Endothelial cell of umbilical vein (primary cell): ENCODE measurements at regions of chr1 and their contacts with region 1.

Region 1: GRCh38 chr1:169794530-169795416 is at the start of gene METTL18:
- DNase-seq: peak; percentile 97
- H3K4me3 ChIP-seq: peak within 1 kb of the TSS; percentile 29 to 92 (median 77)
- H3K27ac ChIP-seq: peak within 1 kb of the TSS; percentile 66
- H3K4me1 ChIP-seq: peaks cover 11% of the 10 kb centered on the region
- H3K27me3 ChIP-seq: no peaks in the 10 kb centered on the region
- CTCF ChIP-seq: peak in 1 of 2 donors; percentile 48
- POLR2A ChIP-seq: peak; percentile 56
- total RNA-seq, gene METTL18: 6.6 TPM in 2 replicates

Region 2: DNA sequence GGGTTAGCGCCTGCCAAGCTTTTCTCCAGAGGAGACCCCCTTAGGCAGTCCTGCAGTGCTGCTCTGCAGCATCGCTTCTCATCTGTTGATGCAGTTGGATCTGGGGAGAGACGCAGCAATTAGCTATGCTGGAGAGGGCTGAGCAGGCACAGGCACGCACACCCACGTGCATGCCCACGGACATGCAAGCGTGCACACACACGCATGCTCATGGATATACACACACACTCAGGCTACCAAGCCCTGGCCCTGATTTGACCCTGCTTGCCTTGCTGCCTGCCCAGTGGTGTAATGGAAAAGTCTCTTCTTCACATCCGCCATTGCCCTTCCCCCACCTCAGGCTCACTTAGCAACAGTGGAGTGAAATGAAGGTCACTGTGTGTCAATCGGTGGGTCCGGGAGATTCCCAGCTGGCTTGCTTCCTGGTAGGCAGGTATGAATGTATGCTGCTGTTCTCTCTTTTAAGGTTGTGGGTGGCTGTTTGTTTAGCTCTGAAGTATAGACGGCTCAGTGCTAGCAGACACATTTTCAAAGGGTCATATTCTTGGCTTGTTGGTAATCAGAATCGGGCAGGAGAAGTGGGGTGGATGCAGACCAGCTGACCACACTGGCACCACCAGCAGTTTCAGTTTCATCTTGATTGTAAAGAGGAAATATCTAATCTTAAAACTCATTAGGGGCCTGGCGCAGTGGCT is 678.7 kb before region 1 on chr1:
- CTCF ChIA-PET with region 1: no interaction called
- POLR2A ChIA-PET with region 1: no interaction called
- dilution Hi-C with region 1: no loop called
- intact Hi-C with region 1: loop called (anchors 10 kb)
- DNase-seq: no peak
- H3K4me3 ChIP-seq: no peak overlapping the region
- H3K27ac ChIP-seq: no peak overlapping the region
- H3K4me1 ChIP-seq: peaks cover 36% of the 10 kb centered on the region
- H3K27me3 ChIP-seq: no peaks in the 10 kb centered on the region
- CTCF ChIP-seq: no peak
- POLR2A ChIP-seq: no peak

Region 3: DNA sequence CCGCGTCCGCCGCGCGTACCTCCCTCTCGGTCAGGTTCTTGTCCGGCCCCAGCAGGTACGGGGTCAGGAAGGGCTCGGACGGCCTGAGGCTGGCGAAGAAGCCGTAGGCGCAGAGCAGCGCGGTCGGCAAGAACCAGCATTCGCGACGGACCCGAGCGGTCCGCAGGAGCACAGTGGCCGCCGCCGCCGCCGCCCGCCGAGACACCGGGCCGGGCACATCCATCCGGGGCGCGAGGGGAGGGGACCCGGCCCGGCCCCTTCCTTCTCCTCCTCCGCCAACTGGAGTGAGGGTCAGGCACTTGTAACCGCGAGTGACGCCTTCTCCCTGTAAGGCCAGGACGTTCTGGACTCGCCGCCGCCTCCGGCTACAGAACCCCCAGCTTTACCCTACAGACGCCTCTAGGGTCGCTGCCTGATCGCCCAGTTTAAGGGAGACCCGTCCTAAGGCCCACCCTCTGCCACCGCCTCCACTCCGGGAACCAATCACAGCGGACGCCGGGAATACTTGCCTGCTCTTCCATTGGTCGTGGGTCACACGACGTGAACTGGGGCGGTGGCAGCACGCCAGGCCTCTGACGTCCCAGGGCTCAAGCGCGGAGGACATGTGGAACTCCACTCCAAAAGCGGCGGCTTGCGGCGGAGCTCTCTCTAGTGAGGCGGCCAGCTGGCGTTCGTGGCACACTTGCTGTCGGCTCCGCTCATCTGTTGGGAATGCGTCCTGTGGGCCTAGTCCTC is 309.1 kb before region 1 on chr1 and contains the start of gene SLC19A2:
- CTCF ChIA-PET with region 1: interaction called, 4 read pairs
- POLR2A ChIA-PET with region 1: no interaction called
- dilution Hi-C with region 1: no loop called
- intact Hi-C with region 1: loop called (anchors 1 kb)
- DNase-seq: peak; percentile 99
- H3K4me3 ChIP-seq: peak within 1 kb of the TSS; percentile 37 to 80 (median 78)
- H3K27ac ChIP-seq: peak within 1 kb of the TSS; percentile 96
- H3K4me1 ChIP-seq: peaks cover 31% of the 10 kb centered on the region
- H3K27me3 ChIP-seq: no peaks in the 10 kb centered on the region
- CTCF ChIP-seq: peak in 1 of 2 donors; percentile 31
- POLR2A ChIP-seq: peak; percentile 87
- total RNA-seq, gene SLC19A2: 5.4 and 7.0 TPM in 2 replicates

Region 4: DNA sequence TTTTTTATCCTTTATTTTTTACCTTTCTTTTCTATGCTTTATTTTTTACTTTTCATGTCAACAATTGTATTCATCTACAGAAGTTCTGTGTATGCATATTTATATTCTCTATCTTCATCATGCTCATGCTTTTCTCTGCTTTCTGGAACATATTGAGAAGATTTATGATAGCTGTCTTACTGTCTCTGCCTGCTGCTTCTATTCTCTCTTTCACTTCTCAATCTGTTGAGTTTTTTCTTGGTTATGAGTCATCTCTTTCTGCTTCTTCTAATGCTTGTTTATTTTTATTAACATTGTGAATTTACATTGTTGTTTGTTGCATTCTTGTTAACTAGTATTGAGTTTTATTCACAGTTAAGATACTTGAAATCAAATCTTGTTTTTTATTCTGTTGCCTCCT is 231.1 kb before region 1 on chr1:
- CTCF ChIA-PET with region 1: no interaction called
- POLR2A ChIA-PET with region 1: no interaction called
- dilution Hi-C with region 1: no loop called
- intact Hi-C with region 1: no loop called
- DNase-seq: no peak
- H3K4me3 ChIP-seq: no peak overlapping the region
- H3K27ac ChIP-seq: no peak overlapping the region
- H3K4me1 ChIP-seq: peaks cover 8% of the 10 kb centered on the region
- H3K27me3 ChIP-seq: no peaks in the 10 kb centered on the region
- CTCF ChIP-seq: no peak
- POLR2A ChIP-seq: no peak

Region 5: GRCh38 chr1:169765580-169766331 is 29.0 kb before region 1 on chr1:
- CTCF ChIA-PET with region 1: no interaction called
- POLR2A ChIA-PET with region 1: no interaction called
- dilution Hi-C with region 1: no loop called
- intact Hi-C with region 1: no loop called
- DNase-seq: no peak
- H3K4me3 ChIP-seq: no peak overlapping the region
- H3K27ac ChIP-seq: no peak overlapping the region
- H3K4me1 ChIP-seq: no peaks in the 10 kb centered on the region
- H3K27me3 ChIP-seq: no peaks in the 10 kb centered on the region
- CTCF ChIP-seq: no peak
- POLR2A ChIP-seq: no peak

Region 6: GRCh38 chr1:169779980-169780379 is 14.8 kb before region 1 on chr1:
- CTCF ChIA-PET with region 1: interaction called, 3 read pairs
- POLR2A ChIA-PET with region 1: no interaction called
- dilution Hi-C with region 1: no loop called
- intact Hi-C with region 1: loop called (anchors 1 kb)
- DNase-seq: peak; percentile 94
- H3K4me3 ChIP-seq: no peak overlapping the region
- H3K27ac ChIP-seq: peak overlapping the region; percentile 81
- H3K4me1 ChIP-seq: peaks cover 35% of the 10 kb centered on the region
- H3K27me3 ChIP-seq: peaks cover under 1 to 5% of the 10 kb centered on the region in 2 experiments
- CTCF ChIP-seq: no peak
- POLR2A ChIP-seq: no peak

Region 7: GRCh38 chr1:169877800-169878491 is 83.2 kb after region 1 on chr1:
- CTCF ChIA-PET with region 1: no interaction called
- POLR2A ChIA-PET with region 1: no interaction called
- dilution Hi-C with region 1: no loop called
- intact Hi-C with region 1: no loop called
- DNase-seq: no peak
- H3K4me3 ChIP-seq: no peak overlapping the region
- H3K27ac ChIP-seq: no peak overlapping the region
- H3K4me1 ChIP-seq: no peaks in the 10 kb centered on the region
- H3K27me3 ChIP-seq: no peaks in the 10 kb centered on the region
- CTCF ChIP-seq: no peak
- POLR2A ChIP-seq: no peak

Region 8: DNA sequence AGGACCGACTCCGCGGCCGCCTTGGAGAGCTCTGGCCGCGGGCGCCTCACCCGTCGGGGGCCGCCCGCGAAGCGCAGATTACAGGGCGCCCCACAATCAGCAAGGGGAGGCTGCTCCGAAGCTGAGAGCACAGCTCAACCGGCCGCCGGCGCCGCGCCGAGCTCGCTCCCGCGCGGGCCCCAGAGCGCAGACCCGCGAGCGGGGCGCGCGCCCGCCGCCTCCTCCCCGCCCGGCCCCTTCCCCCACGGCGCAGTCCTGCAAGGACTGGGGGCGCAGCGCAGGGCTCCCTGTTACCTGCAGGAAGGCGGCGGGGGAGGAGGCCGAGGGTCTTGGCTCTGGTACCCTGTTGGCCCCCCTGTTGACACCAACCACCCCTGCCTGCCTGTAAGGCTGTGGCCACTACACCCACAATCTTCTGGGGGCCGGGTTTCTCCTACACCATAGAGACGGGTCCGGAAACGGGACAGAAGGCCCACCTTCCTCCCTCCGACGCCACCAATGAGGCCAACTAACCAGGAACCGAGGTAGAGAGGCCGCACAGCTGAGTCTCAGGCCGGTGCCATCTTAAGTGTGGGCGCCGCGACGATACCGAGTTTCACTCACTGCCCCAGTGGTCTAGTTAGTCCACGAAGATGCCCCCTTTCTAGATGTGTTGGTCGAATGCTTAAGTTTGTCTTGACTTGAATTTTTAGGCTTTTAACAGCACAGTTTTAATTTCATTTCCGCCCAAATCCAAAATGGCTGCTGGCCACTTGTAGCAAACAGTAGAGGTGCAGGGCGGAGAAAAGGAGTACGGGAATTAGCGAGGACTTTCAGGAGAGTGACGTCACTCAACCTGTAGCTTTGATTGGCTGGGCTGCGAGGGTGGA is 99.0 kb after region 1 on chr1 and contains the start of gene SCYL3:
- CTCF ChIA-PET with region 1: no interaction called
- POLR2A ChIA-PET with region 1: no interaction called
- dilution Hi-C with region 1: no loop called
- intact Hi-C with region 1: loop called (anchors 1 kb)
- DNase-seq: peak; percentile 98
- H3K4me3 ChIP-seq: peak within 1 kb of the TSS; percentile 74 to 94 (median 93)
- H3K27ac ChIP-seq: peak within 1 kb of the TSS; percentile 100
- H3K4me1 ChIP-seq: peaks cover 16% of the 10 kb centered on the region
- H3K27me3 ChIP-seq: peaks cover 11 to 19% of the 10 kb centered on the region in 2 experiments
- CTCF ChIP-seq: no peak
- POLR2A ChIP-seq: peak; percentile 68
- total RNA-seq, gene SCYL3: 5.6 and 6.2 TPM in 2 replicates